H1 (cell line): ENCODE measurements at regions of chr9 and their contacts with region 1.

Region 1: DNA sequence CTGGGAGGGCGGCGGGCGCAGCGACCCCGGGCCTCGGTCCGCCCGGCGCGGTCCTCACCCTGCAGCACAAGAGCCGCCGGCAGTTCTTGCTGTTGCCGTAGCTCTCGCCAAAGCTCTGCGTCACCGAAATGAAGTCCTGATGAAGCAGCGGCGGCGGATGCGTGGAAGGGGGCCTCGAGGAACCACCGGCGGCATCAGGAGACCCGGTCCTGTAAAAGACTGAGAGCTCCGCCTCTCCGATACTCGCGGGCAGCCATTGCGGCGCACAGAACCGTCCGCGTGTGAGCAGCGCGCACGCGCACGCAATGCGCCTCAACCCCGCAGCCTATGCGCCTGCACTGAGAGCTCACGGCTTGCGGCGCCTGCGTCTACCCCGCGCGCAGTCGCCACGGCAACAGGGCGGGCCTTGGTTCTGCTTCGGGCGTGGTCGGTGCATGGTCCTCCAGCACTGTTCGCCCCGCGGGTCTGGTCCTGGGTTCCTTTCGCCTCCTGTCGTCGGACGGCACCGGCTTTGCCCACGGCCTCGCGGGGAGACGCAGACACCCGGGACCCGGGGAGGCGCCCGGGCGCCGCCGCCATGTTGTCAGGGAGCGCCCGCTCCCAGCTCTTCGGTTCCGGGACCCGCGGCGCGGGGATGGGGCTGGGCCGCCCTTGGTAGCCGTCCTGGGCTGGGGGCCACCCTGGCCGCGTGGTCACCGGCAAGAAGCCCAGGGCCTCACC is 9.3 kb upstream of the GRIN1 start:
- DNase-seq: peak; percentile 58 to 90
- H3K4me3 ChIP-seq: peak overlapping the region; percentile 70 to 83 (median 77)
- H3K27ac ChIP-seq: no peak overlapping the region; the same call in 1 of the 2 replicates
- H3K4me1 ChIP-seq: peaks cover 0 to 11% (median 5%) of the 10 kb centered on the region in 4 experiments; a peak in 4 of 7 replicates
- H3K27me3 ChIP-seq: peaks cover 0 to 6% (median 4%) of the 10 kb centered on the region in 4 experiments; a peak in 4 of 7 replicates
- CTCF ChIP-seq: no peak
- EP300 ChIP-seq: no peak
- POLR2A ChIP-seq: peak in 1 of 2 experiments; percentile 80; a peak in 2 of 3 replicates
- RAD21 ChIP-seq: no peak

Region 2: GRCh38 chr9:137114610-137115391 is 14.8 kb before region 1 on chr9 and contains the start of gene DPP7:
- CTCF ChIA-PET with region 1: interaction called, 13 read pairs
- POLR2A ChIA-PET with region 1: interaction called, 4 read pairs
- DNase-seq: peak in 1 of 2 experiments; percentile 69
- H3K4me3 ChIP-seq: peak within 1 kb of the TSS in 2 of 4 experiments; percentile 5 to 63; a peak in 3 of 8 replicates
- H3K27ac ChIP-seq: no peak within 1 kb of the TSS
- H3K4me1 ChIP-seq: peaks cover 0 to 7% (median under 1%) of the 10 kb centered on the region in 4 experiments; a peak in 3 of 7 replicates
- H3K27me3 ChIP-seq: peaks cover 15 to 36% (median 30%) of the 10 kb centered on the region in 4 experiments
- CTCF ChIP-seq: no peak
- EP300 ChIP-seq: no peak
- POLR2A ChIP-seq: no peak
- RAD21 ChIP-seq: no peak
- total RNA-seq, gene DPP7: 21.2 and 21.5 TPM in 2 replicates

Region 3: GRCh38 chr9:137162505-137163100 is 33.0 kb after region 1 on chr9:
- CTCF ChIA-PET with region 1: interaction called, 4 read pairs
- POLR2A ChIA-PET with region 1: interaction called, 14 read pairs
- DNase-seq: peak in 1 of 2 experiments; percentile 66
- H3K4me3 ChIP-seq: peak overlapping the region; percentile 32 to 61 (median 34)
- H3K27ac ChIP-seq: no peak overlapping the region
- H3K4me1 ChIP-seq: peaks cover 0 to 11% (median 6%) of the 10 kb centered on the region in 4 experiments; a peak in 6 of 7 replicates
- H3K27me3 ChIP-seq: peaks cover 53 to 98% (median 90%) of the 10 kb centered on the region in 4 experiments
- CTCF ChIP-seq: peak in 1 of 3 experiments; percentile 3; a peak in 1 of 4 replicates
- EP300 ChIP-seq: no peak
- POLR2A ChIP-seq: no peak
- RAD21 ChIP-seq: no peak; a peak in 1 of 4 replicates

Region 4: GRCh38 chr9:137168905-137169856 is 39.6 kb after region 1 on chr9:
- CTCF ChIA-PET with region 1: interaction called, 8 read pairs
- POLR2A ChIA-PET with region 1: interaction called, 14 read pairs
- DNase-seq: peak in 1 of 2 experiments; percentile 89
- H3K4me3 ChIP-seq: peak overlapping the region; percentile 35 to 65 (median 49)
- H3K27ac ChIP-seq: no peak overlapping the region
- H3K4me1 ChIP-seq: peaks cover 0 to 16% (median 11%) of the 10 kb centered on the region in 4 experiments; a peak in 6 of 7 replicates
- H3K27me3 ChIP-seq: peaks cover 38 to 84% (median 68%) of the 10 kb centered on the region in 4 experiments
- CTCF ChIP-seq: no peak
- EP300 ChIP-seq: no peak
- POLR2A ChIP-seq: no peak
- RAD21 ChIP-seq: no peak; a peak in 1 of 4 replicates

Region 5: GRCh38 chr9:137302176-137302994 is 172.8 kb after region 1 on chr9 and contains the start of gene NRARP:
- CTCF ChIA-PET with region 1: no interaction called
- POLR2A ChIA-PET with region 1: no interaction called
- DNase-seq: peak in 1 of 2 experiments; percentile 94
- H3K4me3 ChIP-seq: peak within 1 kb of the TSS; percentile 83 to 97 (median 84)
- H3K27ac ChIP-seq: 0 out of 2 replicates have a peak within 1 kb of the TSS, but pooled peaks have one; percentile 33
- H3K4me1 ChIP-seq: peaks cover 3 to 57% (median 47%) of the 10 kb centered on the region in 4 experiments
- H3K27me3 ChIP-seq: peaks cover 0 to 16% (median 7%) of the 10 kb centered on the region in 4 experiments; a peak in 5 of 7 replicates
- CTCF ChIP-seq: peak in 2 of 3 experiments; percentile 56 to 74; a peak in 3 of 4 replicates
- EP300 ChIP-seq: no peak
- POLR2A ChIP-seq: peak in 1 of 2 experiments; percentile 78; a peak in 1 of 3 replicates
- RAD21 ChIP-seq: peak; percentile 32 to 54; a peak in 2 of 4 replicates
- total RNA-seq, gene NRARP: 35.4 and 37.2 TPM in 2 replicates